Panc1 (cell line): ENCODE measurements at regions of chr12 and their contacts with region 1.

Region 1: GRCh38 chr12:52069327-52070184 is at the start of gene ATG101:
- DNase-seq: peak; percentile 89
- ATAC-seq: peak; percentile 99
- H3K4me3 ChIP-seq: peak within 1 kb of the TSS; percentile 94 to 96
- H3K27ac ChIP-seq: peak within 1 kb of the TSS; percentile 96
- H3K4me1 ChIP-seq: peaks cover 10% of the 10 kb centered on the region
- H3K27me3 ChIP-seq: no peaks in the 10 kb centered on the region
- CTCF ChIP-seq: peak; percentile 92
- total RNA-seq, gene ATG101: 64.9 TPM

Region 2: DNA sequence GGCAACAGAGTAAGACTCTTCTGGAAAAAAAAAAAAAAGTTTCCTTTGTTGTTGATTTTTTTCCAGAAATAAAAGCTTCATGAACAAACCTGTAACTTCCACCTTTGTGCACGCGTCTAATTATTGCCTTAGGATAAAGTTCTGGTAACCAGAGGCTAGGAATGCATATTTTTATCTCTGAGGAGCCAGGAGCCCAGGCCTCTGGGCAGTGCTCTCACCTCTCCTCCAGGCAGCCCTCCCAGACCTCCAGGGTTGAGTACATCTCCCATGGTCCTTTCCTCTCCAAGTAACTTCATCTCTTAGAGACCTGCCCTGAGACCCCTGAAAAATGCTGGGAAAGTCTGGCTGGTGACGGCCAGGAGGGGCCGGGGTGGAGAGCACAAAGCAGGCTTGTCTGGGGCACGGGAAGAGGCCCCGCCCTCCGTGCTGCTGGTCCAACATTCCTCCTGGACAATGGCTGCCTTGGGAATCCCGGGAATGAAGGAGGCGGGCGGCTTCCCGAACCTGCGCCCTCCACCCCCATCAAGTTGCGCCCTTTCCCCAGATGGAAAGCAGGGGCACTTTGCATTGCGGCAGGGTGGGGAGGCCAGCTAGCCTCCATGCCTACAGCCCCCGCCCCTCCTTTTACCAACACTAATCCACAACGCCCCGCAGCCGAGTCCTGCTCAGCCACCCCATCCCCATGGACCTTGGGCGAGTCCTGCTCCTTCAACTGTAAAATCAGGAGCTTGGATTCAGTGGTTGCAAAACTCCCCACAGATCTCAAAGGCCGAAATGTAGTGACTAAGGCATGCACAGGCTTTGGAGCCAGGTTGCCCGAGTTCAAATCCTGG is 213.7 kb before region 1 on chr12:
- CTCF ChIA-PET with region 1: no interaction called
- POLR2A ChIA-PET with region 1: interaction called, 11 read pairs
- in situ Hi-C with region 1: no loop called
- intact Hi-C with region 1: no loop called
- DNase-seq: no peak
- ATAC-seq: peak; percentile 68
- H3K4me3 ChIP-seq: peak overlapping the region; percentile 1 to 14; a peak in 1 of 4 replicates
- H3K27ac ChIP-seq: no peak overlapping the region
- H3K4me1 ChIP-seq: peaks cover 7% of the 10 kb centered on the region; the same call in 1 of the 2 replicates
- H3K27me3 ChIP-seq: no peaks in the 10 kb centered on the region
- CTCF ChIP-seq: no peak

Region 3: DNA sequence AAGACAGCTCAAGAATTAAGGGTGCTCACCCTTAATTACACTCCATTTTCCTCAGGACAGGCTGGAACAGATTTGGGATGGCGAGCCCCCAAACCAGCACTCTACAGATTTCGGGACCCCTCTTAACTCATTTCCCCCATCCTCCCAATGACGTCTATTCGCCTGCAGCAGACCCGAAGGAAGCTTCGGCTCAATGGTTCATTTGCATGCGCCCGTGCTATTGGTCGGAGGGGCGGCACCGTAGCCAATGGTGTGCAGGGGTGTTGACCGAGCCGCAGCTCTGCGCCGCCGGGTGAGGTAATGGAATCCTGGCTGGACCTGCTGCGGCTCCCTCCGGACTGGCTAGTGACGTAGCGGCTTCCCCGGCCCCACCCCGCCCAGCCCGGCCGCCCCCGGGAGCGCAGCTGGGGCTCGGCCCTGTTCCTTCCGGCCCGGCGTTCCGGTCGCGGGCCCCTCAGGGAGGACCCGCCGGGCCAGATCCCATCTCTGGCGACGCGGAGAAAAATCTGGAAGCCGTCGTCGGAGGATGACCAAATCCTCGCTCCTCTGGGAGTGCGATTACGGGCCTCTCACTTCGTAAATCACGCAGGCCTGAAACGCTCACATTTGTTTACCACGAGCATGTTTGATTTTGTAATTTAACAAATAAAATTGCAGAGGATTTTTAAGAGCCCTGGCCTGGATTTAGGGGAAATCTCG is 36.6 kb before region 1 on chr12:
- CTCF ChIA-PET with region 1: interaction called, 9 read pairs
- POLR2A ChIA-PET with region 1: interaction called, 10 read pairs
- in situ Hi-C with region 1: no loop called
- intact Hi-C with region 1: no loop called
- DNase-seq: peak; percentile 60
- ATAC-seq: peak; percentile 99
- H3K4me3 ChIP-seq: peak overlapping the region; percentile 35 to 64
- H3K27ac ChIP-seq: peak overlapping the region; percentile 79
- H3K4me1 ChIP-seq: 0 out of 2 replicates have a peak, but pooled peaks cover 5% of the 10 kb centered on the region
- H3K27me3 ChIP-seq: 0 out of 2 replicates have a peak, but pooled peaks cover 2% of the 10 kb centered on the region
- CTCF ChIP-seq: no peak

Region 4: DNA sequence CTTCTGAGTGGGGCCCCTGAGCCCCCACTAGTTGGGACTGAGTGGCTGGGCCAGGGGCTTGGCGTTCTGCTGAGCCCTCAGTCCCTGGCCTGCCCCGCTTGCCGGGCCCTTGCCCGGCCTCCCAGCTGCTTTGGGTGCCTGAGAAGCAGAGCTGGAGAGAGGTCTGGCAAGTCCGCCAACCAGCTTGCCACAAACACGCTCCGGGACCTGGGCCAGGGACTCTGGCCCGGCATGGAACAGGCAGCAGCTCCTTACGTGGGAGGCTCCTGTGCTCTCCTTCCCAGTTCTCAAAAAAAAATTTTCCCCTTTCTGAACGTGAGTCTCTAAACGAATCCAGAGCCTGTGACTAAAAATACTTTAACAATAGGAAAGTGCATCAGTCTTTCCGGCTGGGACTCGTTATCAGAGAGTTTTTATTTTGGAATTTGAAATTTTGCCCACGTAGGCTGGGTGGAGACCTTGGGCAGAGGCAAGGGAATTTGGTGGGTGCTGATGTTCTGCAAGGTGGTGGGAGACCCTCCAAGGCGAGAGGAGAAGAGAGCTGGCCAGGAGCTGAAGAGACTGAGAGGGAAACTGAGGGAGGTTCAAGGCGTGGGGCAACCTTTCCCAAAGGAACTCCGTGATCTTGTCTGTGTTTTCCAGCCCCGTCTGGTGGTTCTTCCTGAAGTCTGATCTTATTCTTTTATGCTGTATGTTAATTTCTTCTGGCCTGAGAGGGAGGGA is 25.1 kb before region 1 on chr12:
- CTCF ChIA-PET with region 1: interaction called, 3 read pairs
- POLR2A ChIA-PET with region 1: interaction called, 10 read pairs
- in situ Hi-C with region 1: no loop called
- intact Hi-C with region 1: no loop called
- DNase-seq: no peak
- ATAC-seq: no peak
- H3K4me3 ChIP-seq: no peak overlapping the region
- H3K27ac ChIP-seq: no peak overlapping the region
- H3K4me1 ChIP-seq: no peaks in the 10 kb centered on the region
- H3K27me3 ChIP-seq: no peaks in the 10 kb centered on the region
- CTCF ChIP-seq: no peak

Region 5: DNA sequence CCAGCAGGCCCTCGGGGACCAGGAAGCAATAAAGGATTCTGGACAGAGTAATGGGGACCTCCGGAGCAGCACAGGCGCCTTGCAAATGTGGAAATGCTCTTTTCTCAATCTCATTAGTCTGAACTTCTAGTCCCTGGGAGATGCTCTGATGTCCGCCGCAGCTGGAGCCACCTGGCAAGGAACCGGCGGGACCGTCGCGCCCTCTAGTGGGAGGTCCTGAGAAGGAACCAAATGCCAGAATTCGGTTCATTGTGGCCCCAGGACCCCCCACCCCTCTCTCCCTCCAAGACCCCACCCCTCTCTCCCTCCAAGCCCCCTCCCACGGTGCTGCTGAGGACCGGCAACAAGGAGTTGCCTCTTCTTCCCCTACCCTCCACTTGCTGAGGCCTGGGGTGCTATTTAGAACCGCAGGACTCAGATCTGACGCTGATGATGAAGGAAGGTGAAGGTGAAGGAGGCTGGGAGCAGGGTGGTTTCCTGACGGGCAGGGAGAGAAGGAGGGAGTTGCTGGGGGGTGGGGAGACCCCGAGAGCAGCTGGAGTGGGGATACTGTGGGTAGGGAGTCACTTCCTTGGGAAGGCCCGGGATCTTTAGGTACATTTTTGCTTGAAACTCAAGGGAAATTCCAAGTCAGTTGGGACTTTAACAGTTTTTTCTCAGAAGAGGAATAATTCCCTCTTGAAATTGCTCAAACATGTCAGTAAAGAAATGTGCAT is 52.4 kb after region 1 on chr12:
- CTCF ChIA-PET with region 1: no interaction called
- POLR2A ChIA-PET with region 1: no interaction called
- in situ Hi-C with region 1: no loop called
- intact Hi-C with region 1: no loop called
- DNase-seq: no peak
- ATAC-seq: peak; percentile 67
- H3K4me3 ChIP-seq: no peak overlapping the region
- H3K27ac ChIP-seq: no peak overlapping the region
- H3K4me1 ChIP-seq: no peaks in the 10 kb centered on the region
- H3K27me3 ChIP-seq: no peaks in the 10 kb centered on the region
- CTCF ChIP-seq: peak; percentile 94

Region 6: DNA sequence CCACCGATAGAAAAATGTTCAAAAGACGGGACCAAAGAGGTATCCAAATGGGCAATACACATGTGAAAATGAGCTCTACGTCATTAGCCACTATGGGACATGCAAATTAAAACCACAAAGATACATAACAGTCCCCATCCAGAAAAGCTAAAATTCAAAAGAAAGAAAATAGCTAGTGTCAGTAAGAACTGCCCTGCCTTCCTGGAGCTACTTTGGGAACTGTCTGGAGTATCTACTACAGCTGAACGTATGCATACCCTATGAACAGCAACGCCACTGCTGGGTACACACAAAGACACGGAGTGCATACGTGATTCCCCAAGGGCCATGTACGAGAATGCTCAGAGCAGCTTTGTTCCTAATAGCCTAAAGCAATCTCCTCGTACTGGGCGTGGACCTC is 659.6 kb after region 1 on chr12:
- CTCF ChIA-PET with region 1: no interaction called
- POLR2A ChIA-PET with region 1: no interaction called
- in situ Hi-C with region 1: no loop called
- intact Hi-C with region 1: no loop called
- DNase-seq: no peak
- ATAC-seq: no peak
- H3K4me3 ChIP-seq: no peak overlapping the region
- H3K27ac ChIP-seq: no peak overlapping the region
- H3K4me1 ChIP-seq: no peaks in the 10 kb centered on the region
- H3K27me3 ChIP-seq: peaks cover 17% of the 10 kb centered on the region; the same call in 1 of the 2 replicates
- CTCF ChIP-seq: no peak